ENCODE measurements at regions of chr5 and their contacts with region 1.

Region 1: DNA sequence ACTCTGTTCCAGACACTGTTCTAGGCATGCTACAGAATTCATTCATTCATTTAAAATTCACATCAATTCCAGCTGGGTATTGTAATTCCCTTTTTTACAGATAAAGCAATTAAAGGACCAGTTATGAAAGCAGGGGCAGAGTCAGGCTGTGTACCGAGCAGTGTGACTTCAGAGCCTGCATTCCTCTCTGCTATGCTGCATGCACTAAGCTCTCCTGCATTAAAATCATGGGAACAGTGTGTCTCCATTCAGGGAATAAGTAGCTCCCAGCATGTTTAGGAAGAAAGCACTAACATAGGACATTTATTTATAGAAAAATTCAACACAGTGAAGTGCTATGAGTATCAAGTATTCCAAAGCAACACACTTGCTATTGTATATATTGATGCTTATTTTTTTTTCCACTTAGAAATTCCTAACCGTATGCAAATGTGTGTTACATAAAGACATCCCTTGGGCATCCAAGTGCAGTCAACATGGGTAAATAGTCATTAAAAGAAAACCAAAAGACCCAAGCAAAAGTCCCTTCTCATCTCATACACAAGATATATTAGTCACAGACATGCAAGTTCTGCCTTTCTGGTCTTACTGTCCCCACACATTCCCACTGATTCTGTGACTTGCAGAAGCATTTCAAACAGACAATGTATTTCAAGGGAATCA is 173.7 kb downstream of the GABRB2 start:
- DNase-seq: no peak
- H3K4me3 ChIP-seq: no peak overlapping the region
- H3K27ac ChIP-seq: no peak overlapping the region
- H3K4me1 ChIP-seq: no peaks in the 10 kb centered on the region
- H3K27me3 ChIP-seq: no peaks in the 10 kb centered on the region
- CTCF ChIP-seq: no peak
- POLR2A ChIP-seq: no peak

Region 2: GRCh38 chr5:161535762-161536161 is 162.9 kb after region 1 on chr5:
- intact Hi-C with region 1: no loop called
- DNase-seq: no peak
- H3K4me3 ChIP-seq: no peak overlapping the region
- H3K27ac ChIP-seq: no peak overlapping the region
- H3K4me1 ChIP-seq: no peaks in the 10 kb centered on the region
- H3K27me3 ChIP-seq: no peaks in the 10 kb centered on the region
- CTCF ChIP-seq: no peak
- POLR2A ChIP-seq: no peak

Region 3: GRCh38 chr5:163221581-163221980 is 1848.8 kb after region 1 on chr5:
- intact Hi-C with region 1: loop called (anchors 5 kb)
- DNase-seq: no peak
- H3K4me3 ChIP-seq: no peak overlapping the region
- H3K27ac ChIP-seq: no peak overlapping the region
- H3K4me1 ChIP-seq: no peaks in the 10 kb centered on the region
- H3K27me3 ChIP-seq: no peaks in the 10 kb centered on the region
- CTCF ChIP-seq: no peak
- POLR2A ChIP-seq: no peak

Measured in breast epithelium (tissue), 4 donors.